ENCODE measurements at regions of chr7 and their contacts with region 1.

Region 1: GRCh38 chr7:54556121-54556520 is 13.9 kb downstream of the VSTM2A start:
- DNase-seq: no peak
- H3K4me3 Mint-ChIP-seq: no peak overlapping the region
- H3K27ac Mint-ChIP-seq: no peak overlapping the region
- H3K4me1 Mint-ChIP-seq: no peaks in the 10 kb centered on the region
- H3K27me3 Mint-ChIP-seq: peaks cover 37% of the 10 kb centered on the region
- CTCF ChIP-seq: no peak

Region 2: DNA sequence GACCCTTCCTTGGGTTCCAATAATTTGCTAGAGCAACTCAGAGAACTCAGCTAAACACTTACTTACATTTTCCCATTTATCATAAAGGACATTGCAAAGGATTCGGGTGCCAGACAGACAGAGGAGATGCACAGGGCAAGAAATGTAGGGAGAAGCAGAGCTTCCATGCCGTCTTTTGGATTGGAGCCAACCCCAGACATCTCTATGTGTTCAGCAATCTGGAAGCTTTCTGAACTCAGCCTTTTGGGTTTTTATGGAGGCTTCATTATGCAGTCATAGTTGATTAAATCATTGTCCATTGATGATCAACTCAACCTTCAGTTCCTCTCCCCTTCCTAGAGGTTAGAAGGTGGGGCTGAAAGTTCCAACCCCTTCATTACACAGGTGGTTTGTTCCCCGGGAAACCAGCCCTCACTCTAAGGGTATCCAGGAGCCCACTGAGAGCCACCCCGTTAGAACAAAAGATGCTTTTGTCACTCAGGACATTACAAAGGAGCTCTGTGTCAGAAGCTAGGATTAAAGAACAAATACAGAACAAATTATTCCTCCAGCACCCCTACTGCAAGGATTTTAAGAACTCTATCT is 225.8 kb before region 1 on chr7:
- CTCF ChIA-PET with region 1: no interaction called
- intact Hi-C with region 1: no loop called
- DNase-seq: no peak
- H3K4me3 Mint-ChIP-seq: no peak overlapping the region
- H3K27ac Mint-ChIP-seq: no peak overlapping the region
- H3K4me1 Mint-ChIP-seq: no peaks in the 10 kb centered on the region
- H3K27me3 Mint-ChIP-seq: no peaks in the 10 kb centered on the region
- CTCF ChIP-seq: no peak

Region 3: GRCh38 chr7:55265836-55266642 is 709.9 kb after region 1 on chr7:
- CTCF ChIA-PET with region 1: no interaction called
- intact Hi-C with region 1: loop called (anchors 10 kb)
- DNase-seq: no peak
- H3K4me3 Mint-ChIP-seq: no peak overlapping the region
- H3K27ac Mint-ChIP-seq: no peak overlapping the region
- H3K4me1 Mint-ChIP-seq: peaks cover 9% of the 10 kb centered on the region
- H3K27me3 Mint-ChIP-seq: peaks cover 87% of the 10 kb centered on the region
- CTCF ChIP-seq: no peak